Cardiac septum (tissue), 1 donor: ENCODE measurements at regions of chr5 and their contacts with region 1.

Region 1: DNA sequence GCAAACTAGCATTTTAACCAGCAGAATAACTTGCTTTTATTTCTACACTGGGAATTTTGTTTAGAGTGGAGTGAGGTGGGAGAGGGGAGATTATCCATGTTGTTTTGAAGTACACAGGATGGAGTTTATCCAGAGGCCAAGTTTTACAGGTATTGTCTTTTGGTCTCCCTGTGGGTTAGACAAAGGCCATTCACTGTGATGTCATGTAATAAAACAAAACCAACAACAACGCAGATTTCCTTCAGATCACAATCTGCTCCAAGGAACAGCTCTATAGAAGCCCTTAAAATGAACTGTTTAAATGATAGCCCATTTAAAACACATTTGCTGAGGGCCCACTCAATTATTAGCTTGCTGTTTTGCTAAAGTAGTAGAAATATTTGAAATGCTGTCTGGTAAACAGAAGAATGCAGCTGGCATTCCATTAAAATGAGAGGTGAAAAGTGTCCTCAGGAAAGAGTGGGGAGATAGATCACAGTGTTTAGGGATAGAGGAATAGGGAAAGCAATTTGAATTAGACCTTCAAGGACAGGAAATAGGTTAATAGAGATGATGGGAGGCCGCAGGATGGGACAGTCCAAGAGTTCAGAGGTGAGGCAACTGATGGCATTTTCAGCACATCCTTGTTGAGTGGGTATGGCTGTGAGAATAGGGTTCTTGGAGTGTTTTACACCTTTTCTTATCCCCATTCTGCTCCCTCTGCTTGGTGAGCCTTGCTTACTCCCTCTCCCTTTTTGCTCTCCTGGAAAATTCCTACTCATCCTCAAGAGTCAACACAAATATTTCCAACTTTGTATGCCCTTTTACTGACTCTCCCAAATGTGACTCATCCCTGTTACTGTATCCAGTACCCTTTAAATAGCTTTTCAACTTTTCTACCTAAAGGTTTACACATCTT is 140.1 kb upstream of the NR3C1 start:
- DNase-seq: no peak

Region 2: GRCh38 chr5:143495821-143496275 is 47.8 kb before region 1 on chr5:
- intact Hi-C with region 1: loop called (anchors 5 kb)
- DNase-seq: no peak